ENCODE measurements at regions of chr3 and their contacts with region 1.

Region 1: GRCh38 chr3:197554562-197555280 is 1.0 kb downstream of the BDH1 start:
- DNase-seq: peak; percentile 88
- ATAC-seq: peak; percentile 96
- H3K4me3 Mint-ChIP-seq: peak overlapping the region; percentile 90
- H3K27ac Mint-ChIP-seq: peak overlapping the region; percentile 86
- H3K4me1 Mint-ChIP-seq: peaks cover 8% of the 10 kb centered on the region
- H3K27me3 Mint-ChIP-seq: peaks cover 5% of the 10 kb centered on the region
- CTCF ChIP-seq: no peak

Region 2: DNA sequence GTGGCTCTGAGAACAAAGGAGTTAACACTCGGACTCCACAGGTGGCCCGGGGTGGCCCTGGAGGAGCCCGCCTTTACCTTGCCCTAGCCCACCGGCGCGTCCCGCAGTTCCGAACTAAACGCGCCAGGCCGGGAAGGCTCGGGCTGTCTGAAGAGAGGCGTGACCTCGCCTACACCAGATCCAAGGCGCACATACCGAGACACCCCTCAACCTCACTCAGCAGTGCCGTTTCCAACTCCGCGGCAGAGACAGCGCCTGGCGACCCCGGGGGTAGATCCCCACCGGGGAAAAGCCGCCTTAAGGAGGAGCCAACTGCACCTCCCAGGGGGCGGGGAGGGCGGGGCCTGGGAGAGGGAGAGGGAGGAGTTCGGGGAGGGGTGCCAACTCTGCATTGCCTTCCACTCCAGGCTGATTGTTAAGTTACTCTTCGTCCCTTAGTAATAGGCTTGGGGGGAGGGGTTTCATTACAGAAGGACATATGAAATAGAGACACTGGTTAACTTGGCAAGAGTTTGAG is 256.3 kb before region 1 on chr3 and contains the start of gene DLG1:
- CTCF ChIA-PET with region 1: no interaction called
- POLR2A ChIA-PET with region 1: no interaction called
- intact Hi-C with region 1: loop called (anchors 2 kb)
- DNase-seq: no peak
- ATAC-seq: peak; percentile 79
- H3K4me3 Mint-ChIP-seq: peak within 1 kb of the TSS; percentile 92
- H3K27ac Mint-ChIP-seq: peak within 1 kb of the TSS; percentile 91
- H3K4me1 Mint-ChIP-seq: peaks cover 28% of the 10 kb centered on the region
- H3K27me3 Mint-ChIP-seq: peaks cover 17% of the 10 kb centered on the region
- CTCF ChIP-seq: no peak
- total RNA-seq, gene DLG1: 82.6 and 102 TPM in 2 replicates

Region 3: DNA sequence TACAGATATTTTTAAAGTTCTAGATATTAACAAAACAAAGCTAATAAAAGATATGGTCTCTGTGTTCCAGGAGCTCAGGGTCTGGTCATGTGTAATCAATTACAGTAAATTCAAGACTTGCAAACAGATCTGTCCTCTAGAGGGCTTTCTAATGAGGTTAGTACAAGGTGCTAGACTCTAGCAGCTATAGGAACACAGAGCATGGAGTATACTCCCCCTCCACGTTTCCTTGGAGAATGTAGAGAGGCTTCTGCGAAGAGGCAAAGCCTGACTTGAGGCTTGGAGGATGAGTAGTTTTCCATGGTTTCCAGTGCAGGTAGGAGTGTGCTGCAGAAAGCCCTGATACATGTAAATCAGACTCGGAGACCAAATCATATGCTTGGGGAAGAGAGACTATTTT is 223.6 kb before region 1 on chr3:
- CTCF ChIA-PET with region 1: no interaction called
- POLR2A ChIA-PET with region 1: no interaction called
- intact Hi-C with region 1: no loop called
- DNase-seq: no peak
- ATAC-seq: no peak
- H3K4me3 Mint-ChIP-seq: no peak overlapping the region
- H3K27ac Mint-ChIP-seq: no peak overlapping the region
- H3K4me1 Mint-ChIP-seq: no peaks in the 10 kb centered on the region
- H3K27me3 Mint-ChIP-seq: peaks cover 19% of the 10 kb centered on the region
- CTCF ChIP-seq: no peak

Region 4: GRCh38 chr3:197511130-197511529 is 43.6 kb before region 1 on chr3:
- CTCF ChIA-PET with region 1: no interaction called
- POLR2A ChIA-PET with region 1: no interaction called
- intact Hi-C with region 1: loop called (anchors 2 kb)
- DNase-seq: no peak
- ATAC-seq: no peak
- H3K4me3 Mint-ChIP-seq: no peak overlapping the region
- H3K27ac Mint-ChIP-seq: no peak overlapping the region
- H3K4me1 Mint-ChIP-seq: peaks cover 4% of the 10 kb centered on the region
- H3K27me3 Mint-ChIP-seq: no peaks in the 10 kb centered on the region
- CTCF ChIP-seq: no peak

Measured in activated B cell treated with CpG ODN at 0.5 μM for 24 hours (primary cell).